ENCODE measurements at regions of chr1 and their contacts with region 1.

Region 1: DNA sequence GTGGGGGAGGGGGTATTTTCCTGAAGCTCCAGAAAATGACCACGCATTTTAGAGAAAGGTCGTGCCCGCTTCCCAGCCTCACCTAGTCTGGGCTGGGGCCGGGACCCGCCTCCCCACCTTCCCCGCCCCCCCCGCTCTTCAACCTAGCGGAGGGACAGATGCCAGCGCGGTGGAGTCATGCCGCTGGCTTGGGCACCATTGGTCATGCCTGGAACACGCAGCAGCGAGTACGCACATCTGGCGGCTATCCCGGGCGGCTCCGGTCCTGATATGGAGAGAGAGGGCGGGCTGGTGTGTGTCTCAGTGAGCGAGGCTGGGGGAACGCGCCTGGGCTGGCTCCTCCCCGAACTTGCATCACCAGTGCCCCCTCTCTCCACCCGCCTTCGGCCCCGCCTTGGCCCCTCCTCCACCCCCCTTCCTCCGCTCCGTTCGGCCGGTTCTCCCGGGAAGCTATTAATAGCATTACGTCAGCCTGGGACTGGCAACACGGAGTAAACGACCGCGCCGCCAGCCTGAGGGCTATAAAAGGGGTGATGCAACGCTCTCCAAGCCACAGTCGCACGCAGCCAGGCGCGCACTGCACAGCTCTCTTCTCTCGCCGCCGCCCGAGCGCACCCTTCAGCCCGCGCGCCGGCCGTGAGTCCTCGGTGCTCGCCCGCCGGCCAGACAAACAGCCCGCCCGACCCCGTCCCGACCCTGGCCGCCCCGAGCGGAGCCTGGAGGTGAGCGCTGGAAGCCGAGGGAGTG is at the start of gene ATF3:
- DNase-seq: peak; percentile 100
- H3K4me3 ChIP-seq: peak within 1 kb of the TSS; percentile 49 to 72
- H3K27ac ChIP-seq: peak within 1 kb of the TSS; percentile 97 to 99
- H3K4me1 ChIP-seq: peaks cover 4% of the 10 kb centered on the region
- H3K27me3 ChIP-seq: no peaks in the 10 kb centered on the region
- CTCF ChIP-seq: peak in 1 of 4 experiments; percentile 3
- POLR2A ChIP-seq: peak; percentile 96
- total RNA-seq, gene ATF3: 6.0 to 14.8 TPM

Region 2: GRCh38 chr1:212558693-212559480 is 49.5 kb before region 1 on chr1:
- intact Hi-C with region 1: loop called (anchors 1 kb)
- DNase-seq: peak; percentile 90
- H3K4me3 ChIP-seq: peak overlapping the region; percentile 74 to 77
- H3K27ac ChIP-seq: peak overlapping the region; percentile 91 to 92
- H3K4me1 ChIP-seq: no peaks in the 10 kb centered on the region
- H3K27me3 ChIP-seq: no peaks in the 10 kb centered on the region
- CTCF ChIP-seq: peak in 1 of 4 experiments; percentile 11
- POLR2A ChIP-seq: peak; percentile 84

Measured in prostate gland (tissue), 2 donors.